CD4-positive, alpha-beta memory T cell (primary cell): ENCODE measurements at regions of chrX and their contacts with region 1.

Region 1: GRCh38 chrX:318739-319578 is at the start of gene GTPBP6:
- DNase-seq: peak; percentile 98 to 100 (median 99)
- H3K4me3 ChIP-seq: peak within 1 kb of the TSS; percentile 42 to 76
- H3K4me3 Mint-ChIP-seq: peak within 1 kb of the TSS; percentile 87 to 97 (median 94)
- H3K27ac ChIP-seq: peak within 1 kb of the TSS; percentile 85
- H3K27ac Mint-ChIP-seq: peak within 1 kb of the TSS; percentile 95 to 100 (median 99)
- H3K4me1 ChIP-seq: peaks cover 41% of the 10 kb centered on the region
- H3K4me1 Mint-ChIP-seq: peaks cover 20 to 40% (median 27%) of the 10 kb centered on the region in 4 donors
- H3K27me3 ChIP-seq: no peaks in the 10 kb centered on the region
- H3K27me3 Mint-ChIP-seq: peaks cover 2 to 4% of the 10 kb centered on the region in 2 donors
- total RNA-seq, gene GTPBP6: 77.1 to 79.3 TPM

Region 2: GRCh38 chrX:283115-283845 is 35.7 kb before region 1 on chrX:
- CTCF ChIA-PET with region 1: no interaction called
- POLR2A ChIA-PET with region 1: no interaction called
- intact Hi-C with region 1: loop called (anchors 1 kb)
- DNase-seq: peak; percentile 82 to 94 (median 84)
- H3K4me3 ChIP-seq: peak overlapping the region; percentile 57 to 87
- H3K4me3 Mint-ChIP-seq: peak overlapping the region; percentile 90 to 98 (median 96)
- H3K27ac ChIP-seq: peak overlapping the region; percentile 46
- H3K27ac Mint-ChIP-seq: peak overlapping the region; percentile 85 to 97 (median 91)
- H3K4me1 ChIP-seq: peaks cover 7% of the 10 kb centered on the region
- H3K4me1 Mint-ChIP-seq: peaks cover 3 to 39% (median 18%) of the 10 kb centered on the region in 4 donors
- H3K27me3 ChIP-seq: no peaks in the 10 kb centered on the region
- H3K27me3 Mint-ChIP-seq: no peaks in the 10 kb centered on the region

Region 3: GRCh38 chrX:357693-358471 is 38.9 kb after region 1 on chrX:
- CTCF ChIA-PET with region 1: no interaction called
- POLR2A ChIA-PET with region 1: no interaction called
- intact Hi-C with region 1: loop called (anchors 2 kb)
- DNase-seq: peak; percentile 51 to 67 (median 63)
- H3K4me3 ChIP-seq: no peak overlapping the region
- H3K4me3 Mint-ChIP-seq: peak overlapping the region; percentile 21 to 73 (median 52)
- H3K27ac ChIP-seq: peak overlapping the region; percentile 3
- H3K27ac Mint-ChIP-seq: peak overlapping the region; percentile 73 to 97 (median 94)
- H3K4me1 ChIP-seq: peaks cover 15% of the 10 kb centered on the region
- H3K4me1 Mint-ChIP-seq: peaks cover 17 to 30% (median 21%) of the 10 kb centered on the region in 4 donors
- H3K27me3 ChIP-seq: no peaks in the 10 kb centered on the region
- H3K27me3 Mint-ChIP-seq: no peaks in the 10 kb centered on the region

Region 4: DNA sequence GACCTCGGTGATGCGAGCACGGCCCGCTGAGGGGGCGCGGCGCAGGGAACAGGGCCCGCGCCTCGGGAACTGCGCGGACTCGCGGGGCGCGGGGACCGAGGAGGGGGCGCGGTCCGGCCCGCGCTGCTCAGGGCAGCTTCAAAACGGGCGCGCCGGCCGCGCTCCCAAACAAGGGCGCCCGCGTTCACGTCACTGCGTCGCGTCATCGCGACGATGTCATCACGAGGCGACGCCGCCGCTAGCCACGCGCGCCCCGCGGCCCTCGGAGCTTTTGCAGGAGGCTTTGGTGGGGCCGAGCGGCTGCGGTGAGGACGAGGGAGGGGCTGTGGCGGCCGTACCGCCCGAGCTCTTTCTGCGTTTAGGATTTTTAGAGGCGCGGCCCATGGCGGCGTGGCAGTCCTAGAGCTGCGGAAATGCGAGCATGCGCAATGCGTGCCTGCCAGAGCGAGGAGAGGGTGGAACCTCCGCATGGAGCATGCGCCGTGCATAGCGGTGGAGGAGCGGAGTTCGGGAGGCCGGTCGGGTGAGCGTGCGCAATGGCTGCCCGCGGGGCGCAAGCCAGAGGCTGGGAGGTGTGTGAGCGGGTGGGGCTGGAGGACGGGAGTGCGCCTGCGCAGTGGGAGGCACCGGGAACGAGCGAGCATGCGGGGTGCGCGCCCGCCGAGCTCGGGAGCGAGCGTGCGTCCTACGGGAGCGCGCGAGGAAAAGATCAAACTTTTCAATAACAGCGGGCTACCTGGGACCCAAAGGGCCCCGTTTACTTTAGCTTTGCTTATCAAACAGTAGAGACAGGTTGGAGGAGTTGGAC is 68.0 kb after region 1 on chrX and contains the start of gene PPP2R3B:
- CTCF ChIA-PET with region 1: no interaction called
- POLR2A ChIA-PET with region 1: no interaction called
- intact Hi-C with region 1: loop called (anchors 1 kb)
- DNase-seq: peak; percentile 98 to 100 (median 99)
- H3K4me3 ChIP-seq: peak within 1 kb of the TSS; percentile 29 to 99
- H3K4me3 Mint-ChIP-seq: peak within 1 kb of the TSS; percentile 85 to 96 (median 91)
- H3K27ac ChIP-seq: peak within 1 kb of the TSS; percentile 100
- H3K27ac Mint-ChIP-seq: peak within 1 kb of the TSS; percentile 92 to 100 (median 98)
- H3K4me1 ChIP-seq: peaks cover 6% of the 10 kb centered on the region
- H3K4me1 Mint-ChIP-seq: peaks cover 9 to 11% (median 10%) of the 10 kb centered on the region in 4 donors
- H3K27me3 ChIP-seq: no peaks in the 10 kb centered on the region
- H3K27me3 Mint-ChIP-seq: peaks cover 0 to 1% of the 10 kb centered on the region in 2 donors
- total RNA-seq, gene PPP2R3B: 42.3 to 45.2 TPM

Region 5: GRCh38 chrX:1205680-1206611 is 887.0 kb after region 1 on chrX:
- CTCF ChIA-PET with region 1: no interaction called
- POLR2A ChIA-PET with region 1: no interaction called
- intact Hi-C with region 1: loop called (anchors 5 kb)
- DNase-seq: peak; percentile 52 to 72 (median 67)
- H3K4me3 ChIP-seq: peak overlapping the region; percentile 31 to 66
- H3K4me3 Mint-ChIP-seq: peak overlapping the region; percentile 80 to 87 (median 84)
- H3K27ac ChIP-seq: no peak overlapping the region
- H3K27ac Mint-ChIP-seq: peak overlapping the region in 5 of 7 donors; percentile 26 to 80 (median 49)
- H3K4me1 ChIP-seq: peaks cover 30% of the 10 kb centered on the region
- H3K4me1 Mint-ChIP-seq: peaks cover 19 to 36% (median 27%) of the 10 kb centered on the region in 4 donors
- H3K27me3 ChIP-seq: no peaks in the 10 kb centered on the region
- H3K27me3 Mint-ChIP-seq: no peaks in the 10 kb centered on the region